Endothelial cell of umbilical vein (primary cell): ENCODE measurements at regions of chr10 and their contacts with region 1.

Region 1: GRCh38 chr10:122279725-122280141 is 8.6 kb downstream of the BTBD16 start:
- DNase-seq: peak; percentile 74
- H3K4me3 ChIP-seq: no peak overlapping the region
- H3K27ac ChIP-seq: no peak overlapping the region
- H3K4me1 ChIP-seq: peaks cover 2% of the 10 kb centered on the region
- H3K27me3 ChIP-seq: no peaks in the 10 kb centered on the region
- CTCF ChIP-seq: peak; percentile 77 to 81
- POLR2A ChIP-seq: no peak

Region 2: DNA sequence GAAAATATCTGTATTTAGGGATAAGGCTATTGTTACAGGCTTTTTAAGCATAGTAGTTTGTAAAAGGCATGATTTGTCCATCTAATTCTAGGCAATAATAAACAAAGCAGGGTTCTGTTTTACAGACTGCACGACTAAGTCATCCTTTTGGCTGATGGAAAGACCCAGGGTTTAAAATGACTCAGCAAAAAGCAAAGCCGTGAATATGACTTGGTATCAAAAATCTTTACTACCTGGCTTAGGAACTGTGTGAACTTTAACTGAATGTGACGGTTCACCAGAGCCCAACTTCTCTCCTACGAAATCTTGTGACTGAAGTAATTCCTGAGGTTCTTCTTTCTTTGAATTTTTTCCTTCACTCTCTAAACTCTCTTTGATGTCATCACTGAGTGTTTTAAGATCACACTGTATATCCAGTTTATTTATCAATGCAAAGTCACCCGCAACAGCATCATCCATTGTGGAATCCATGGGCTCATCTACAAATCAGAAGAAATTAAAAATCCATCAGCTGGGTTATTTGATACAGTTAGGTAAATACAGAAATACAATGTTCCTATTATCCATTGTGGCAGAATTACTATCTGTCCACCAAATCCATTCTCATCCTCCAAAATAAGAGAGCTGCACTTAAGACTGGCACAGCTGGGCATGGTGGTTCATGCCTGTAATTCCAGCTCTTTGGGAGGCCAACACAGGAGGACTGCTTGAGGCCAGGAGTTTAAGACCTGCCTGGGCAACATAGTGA is 368.9 kb before region 1 on chr10:
- CTCF ChIA-PET with region 1: no interaction called
- POLR2A ChIA-PET with region 1: no interaction called
- dilution Hi-C with region 1: no loop called
- intact Hi-C with region 1: no loop called
- DNase-seq: no peak
- H3K4me3 ChIP-seq: no peak overlapping the region
- H3K27ac ChIP-seq: no peak overlapping the region
- H3K4me1 ChIP-seq: no peaks in the 10 kb centered on the region
- H3K27me3 ChIP-seq: no peaks in the 10 kb centered on the region
- CTCF ChIP-seq: no peak
- POLR2A ChIP-seq: no peak

Region 3: DNA sequence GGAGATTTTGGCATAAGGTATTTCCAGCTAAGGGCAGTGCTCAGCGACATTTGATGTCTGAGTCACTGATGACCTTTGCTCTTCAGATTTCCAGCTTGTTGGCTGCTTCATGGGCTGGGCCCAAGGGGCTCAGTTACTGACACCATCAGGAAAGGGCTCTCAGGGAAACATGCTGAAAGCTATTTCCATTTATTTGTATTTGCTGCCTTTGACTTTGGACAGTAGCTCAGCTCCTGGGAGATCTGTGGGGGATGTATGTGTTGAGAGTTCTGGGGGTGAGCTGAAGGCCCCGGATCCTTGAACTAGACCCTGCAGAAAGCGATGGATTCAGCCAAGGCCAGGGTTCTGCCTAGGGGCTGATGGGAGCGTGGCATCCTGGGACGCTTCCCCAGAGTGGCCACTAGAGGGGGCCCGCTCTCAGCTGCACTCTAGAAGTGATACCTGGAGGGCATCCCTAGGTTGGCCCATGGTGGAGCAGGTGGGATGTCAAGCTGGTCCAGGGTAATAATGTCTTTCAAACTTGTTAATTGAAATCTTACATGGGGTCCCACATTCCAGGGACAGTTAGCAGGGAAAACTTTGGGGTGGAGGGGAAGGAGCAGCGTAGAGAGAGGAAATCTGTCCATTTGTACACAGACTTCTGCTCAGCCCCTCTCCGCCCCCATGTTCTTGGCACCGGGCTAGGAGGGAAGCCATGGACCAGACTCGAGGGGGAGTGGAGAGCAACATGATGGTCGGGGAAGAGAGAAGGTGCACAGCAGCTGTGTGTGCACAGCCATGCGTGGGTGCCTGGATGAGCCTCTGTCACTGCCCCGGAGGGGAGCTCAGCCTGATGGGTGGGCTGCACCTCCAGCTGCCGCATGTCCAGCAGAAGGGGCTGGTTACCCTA is 11.6 kb before region 1 on chr10:
- CTCF ChIA-PET with region 1: interaction called, 30 read pairs
- POLR2A ChIA-PET with region 1: no interaction called
- dilution Hi-C with region 1: no loop called
- intact Hi-C with region 1: no loop called
- DNase-seq: peak; percentile 47
- H3K4me3 ChIP-seq: no peak overlapping the region
- H3K27ac ChIP-seq: peak overlapping the region; percentile 74
- H3K4me1 ChIP-seq: peaks cover 20% of the 10 kb centered on the region
- H3K27me3 ChIP-seq: no peaks in the 10 kb centered on the region
- CTCF ChIP-seq: peak; percentile 96 to 97
- POLR2A ChIP-seq: no peak

Region 4: DNA sequence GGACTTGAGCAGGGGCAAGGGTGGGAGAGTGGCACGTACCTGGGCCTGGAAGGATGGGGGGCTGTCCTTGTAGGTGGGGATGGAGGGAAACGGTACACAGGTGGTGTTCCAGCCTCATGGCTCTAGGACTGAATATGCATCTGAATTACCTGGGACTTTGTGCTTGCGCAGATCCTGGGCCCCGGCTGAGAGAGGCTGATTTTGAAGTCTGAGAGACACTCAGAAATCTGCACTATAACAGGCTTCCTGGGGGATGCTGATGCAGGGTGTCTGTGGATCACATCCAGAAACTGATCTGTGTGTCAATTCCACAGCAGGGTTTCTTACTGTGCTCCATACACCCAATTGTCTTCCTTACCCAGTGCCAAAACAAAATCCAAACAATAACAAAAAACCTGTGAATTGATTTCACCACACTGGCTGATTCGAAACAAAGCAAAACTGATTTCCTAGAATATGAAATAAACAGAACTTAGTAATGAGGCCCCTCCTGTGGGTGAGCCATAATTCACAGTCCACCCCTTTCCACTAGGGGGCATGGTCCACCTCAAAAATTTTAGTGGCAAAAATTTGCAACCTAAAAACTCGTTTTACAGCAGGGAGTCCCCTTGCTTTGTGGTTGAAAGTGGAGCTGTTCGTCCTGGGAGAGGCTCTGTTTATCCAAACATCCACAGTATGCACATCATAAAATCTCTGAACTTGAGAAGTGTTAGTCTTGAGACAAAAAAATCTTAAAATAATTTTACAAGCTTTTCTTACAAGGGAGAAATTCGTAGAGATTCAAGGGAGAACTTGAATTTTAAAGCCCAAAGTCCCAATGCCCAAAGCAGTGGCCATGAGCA is 62.8 kb after region 1 on chr10:
- CTCF ChIA-PET with region 1: interaction called, 9 read pairs
- POLR2A ChIA-PET with region 1: no interaction called
- dilution Hi-C with region 1: no loop called
- intact Hi-C with region 1: loop called (anchors 1 kb)
- DNase-seq: peak; percentile 71
- H3K4me3 ChIP-seq: no peak overlapping the region
- H3K27ac ChIP-seq: no peak overlapping the region
- H3K4me1 ChIP-seq: no peaks in the 10 kb centered on the region
- H3K27me3 ChIP-seq: no peaks in the 10 kb centered on the region
- CTCF ChIP-seq: peak; percentile 64 to 84
- POLR2A ChIP-seq: no peak

Region 5: DNA sequence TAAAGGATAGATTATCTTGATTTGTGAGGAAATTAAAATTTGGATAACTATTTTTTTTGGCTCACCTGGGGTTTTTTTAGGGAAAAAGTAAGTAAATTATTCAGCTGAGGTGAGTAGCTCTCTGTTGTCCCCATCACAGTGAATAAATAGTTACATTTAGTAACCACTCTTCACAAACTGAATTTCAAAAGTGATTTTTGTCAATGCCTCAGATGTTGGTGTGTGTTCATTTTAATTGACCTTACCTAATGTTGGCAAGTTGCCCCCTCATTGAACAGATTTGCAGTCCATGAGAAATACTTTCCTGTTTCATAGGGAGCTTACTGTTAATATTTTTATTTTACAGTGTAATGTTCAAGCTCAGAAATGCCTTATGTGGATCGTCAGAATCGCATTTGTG is 113.1 kb after region 1 on chr10:
- CTCF ChIA-PET with region 1: no interaction called
- POLR2A ChIA-PET with region 1: no interaction called
- dilution Hi-C with region 1: no loop called
- intact Hi-C with region 1: no loop called
- DNase-seq: no peak
- H3K4me3 ChIP-seq: no peak overlapping the region
- H3K27ac ChIP-seq: no peak overlapping the region
- H3K4me1 ChIP-seq: no peaks in the 10 kb centered on the region
- H3K27me3 ChIP-seq: no peaks in the 10 kb centered on the region
- CTCF ChIP-seq: no peak
- POLR2A ChIP-seq: no peak

Region 6: DNA sequence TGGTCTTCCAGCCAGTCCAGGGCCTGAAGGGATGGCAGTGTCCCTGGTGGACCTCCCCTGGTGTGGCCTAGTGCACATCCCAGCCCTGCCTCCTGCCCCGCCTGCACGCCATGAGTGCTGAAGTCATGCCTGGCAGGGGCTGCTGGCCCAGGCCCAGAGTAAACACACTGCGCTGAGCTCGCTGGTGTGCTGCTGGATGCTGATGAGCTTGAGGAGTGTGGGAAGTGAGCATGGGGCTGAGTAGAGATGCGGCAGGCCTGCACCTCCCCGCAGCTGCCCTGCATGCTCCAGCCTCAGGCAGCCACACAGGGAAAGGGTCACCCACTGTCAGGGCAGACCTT is 224.8 kb after region 1 on chr10:
- CTCF ChIA-PET with region 1: interaction called, 14 read pairs
- POLR2A ChIA-PET with region 1: no interaction called
- dilution Hi-C with region 1: no loop called
- intact Hi-C with region 1: no loop called
- DNase-seq: peak; percentile 94
- H3K4me3 ChIP-seq: no peak overlapping the region
- H3K27ac ChIP-seq: peak overlapping the region; percentile 11
- H3K4me1 ChIP-seq: peaks cover 9% of the 10 kb centered on the region
- H3K27me3 ChIP-seq: no peaks in the 10 kb centered on the region
- CTCF ChIP-seq: no peak
- POLR2A ChIP-seq: no peak

Region 7: DNA sequence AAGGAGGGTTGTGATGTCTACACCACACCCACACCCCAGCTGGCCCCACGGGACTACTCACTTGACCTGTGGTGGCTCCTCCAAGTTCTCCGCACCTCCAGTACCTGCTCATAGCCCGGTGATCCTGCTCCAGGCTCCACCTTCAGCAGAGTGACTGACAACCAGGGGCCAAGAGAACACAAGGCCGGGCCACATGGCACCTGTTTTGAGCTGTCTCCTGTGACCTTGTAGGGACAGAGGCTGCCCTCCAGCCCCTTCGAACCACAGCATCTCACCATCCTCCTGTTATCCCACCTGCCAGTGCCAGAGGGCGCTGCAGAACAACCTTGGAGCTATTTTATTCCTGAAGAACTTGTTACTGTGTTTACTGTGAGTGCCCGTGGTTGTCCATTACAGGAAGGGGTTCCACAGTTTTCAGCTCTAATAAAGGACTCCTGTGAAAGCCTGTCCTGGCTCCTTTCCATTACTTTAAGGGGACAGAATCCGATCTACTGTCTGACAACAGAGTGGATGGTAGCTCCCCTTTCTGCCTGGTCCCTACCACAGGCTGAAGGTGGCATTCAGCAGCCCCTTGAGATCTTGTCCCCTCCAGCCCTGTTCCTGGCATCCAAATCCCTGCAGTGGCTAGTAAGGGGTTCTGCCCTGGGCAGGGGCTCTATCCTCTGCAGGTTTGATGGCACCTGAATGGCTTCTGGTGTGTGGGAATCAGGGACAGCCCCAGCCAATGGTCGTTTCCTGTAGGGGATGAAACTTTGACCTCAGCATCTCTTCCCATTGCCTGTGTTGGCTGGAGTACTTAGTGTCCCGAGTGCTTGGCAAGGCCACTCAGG is 369.1 kb after region 1 on chr10:
- CTCF ChIA-PET with region 1: interaction called, 11 read pairs
- POLR2A ChIA-PET with region 1: no interaction called
- dilution Hi-C with region 1: no loop called
- intact Hi-C with region 1: loop called (anchors 1 kb)
- DNase-seq: peak; percentile 50
- H3K4me3 ChIP-seq: no peak overlapping the region
- H3K27ac ChIP-seq: no peak overlapping the region
- H3K4me1 ChIP-seq: no peaks in the 10 kb centered on the region
- H3K27me3 ChIP-seq: peaks cover 3 to 9% of the 10 kb centered on the region in 2 experiments
- CTCF ChIP-seq: peak; percentile 72 to 75
- POLR2A ChIP-seq: no peak

Region 8: GRCh38 chr10:122703439-122704118 is 423.8 kb after region 1 on chr10:
- CTCF ChIA-PET with region 1: interaction called, 21 read pairs
- POLR2A ChIA-PET with region 1: no interaction called
- dilution Hi-C with region 1: no loop called
- intact Hi-C with region 1: loop called (anchors 1 kb)
- DNase-seq: peak; percentile 55
- H3K4me3 ChIP-seq: no peak overlapping the region
- H3K27ac ChIP-seq: no peak overlapping the region
- H3K4me1 ChIP-seq: no peaks in the 10 kb centered on the region
- H3K27me3 ChIP-seq: peaks cover 0 to 2% of the 10 kb centered on the region in 2 experiments
- CTCF ChIP-seq: peak; percentile 74 to 90
- POLR2A ChIP-seq: no peak